ENCODE measurements at regions of chr9 and their contacts with region 1.

Region 1: DNA sequence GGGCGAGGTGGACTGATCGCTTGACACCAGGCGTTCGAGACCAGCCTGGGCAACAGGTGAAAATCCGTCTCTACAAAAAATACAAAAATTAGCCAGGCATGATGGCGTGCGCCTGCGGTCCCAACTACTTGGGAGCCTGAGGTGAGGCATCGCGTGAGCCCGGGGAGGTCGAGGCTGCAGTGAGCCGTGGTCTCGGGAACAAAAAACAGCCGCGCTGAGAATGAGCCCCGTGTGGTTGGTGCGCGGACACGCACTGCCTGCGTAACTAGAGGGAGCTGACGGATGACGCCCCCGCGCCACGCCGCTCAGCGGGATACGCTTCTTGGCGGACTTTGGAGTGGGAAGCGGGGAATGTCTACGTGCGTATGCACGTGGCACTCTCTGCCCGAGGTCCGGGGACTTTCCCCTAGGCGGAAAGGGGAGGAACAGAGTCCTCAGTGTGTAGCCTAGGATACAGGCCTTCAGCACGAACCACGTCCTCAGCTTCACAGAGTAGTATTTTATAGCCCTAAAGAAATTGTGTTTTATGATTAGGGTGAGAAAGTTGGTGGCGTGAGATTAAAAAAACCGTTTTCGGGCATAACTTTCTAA is at the start of gene RMRP:
- DNase-seq: peak; percentile 99
- H3K4me3 ChIP-seq: peak within 1 kb of the TSS; percentile 93
- H3K27ac ChIP-seq: peak within 1 kb of the TSS; percentile 96
- H3K27me3 ChIP-seq: no peaks in the 10 kb centered on the region
- CTCF ChIP-seq: peak; percentile 34
- polyA plus RNA-seq, gene RMRP: 173 and 306 TPM in 2 replicates

Region 2: DNA sequence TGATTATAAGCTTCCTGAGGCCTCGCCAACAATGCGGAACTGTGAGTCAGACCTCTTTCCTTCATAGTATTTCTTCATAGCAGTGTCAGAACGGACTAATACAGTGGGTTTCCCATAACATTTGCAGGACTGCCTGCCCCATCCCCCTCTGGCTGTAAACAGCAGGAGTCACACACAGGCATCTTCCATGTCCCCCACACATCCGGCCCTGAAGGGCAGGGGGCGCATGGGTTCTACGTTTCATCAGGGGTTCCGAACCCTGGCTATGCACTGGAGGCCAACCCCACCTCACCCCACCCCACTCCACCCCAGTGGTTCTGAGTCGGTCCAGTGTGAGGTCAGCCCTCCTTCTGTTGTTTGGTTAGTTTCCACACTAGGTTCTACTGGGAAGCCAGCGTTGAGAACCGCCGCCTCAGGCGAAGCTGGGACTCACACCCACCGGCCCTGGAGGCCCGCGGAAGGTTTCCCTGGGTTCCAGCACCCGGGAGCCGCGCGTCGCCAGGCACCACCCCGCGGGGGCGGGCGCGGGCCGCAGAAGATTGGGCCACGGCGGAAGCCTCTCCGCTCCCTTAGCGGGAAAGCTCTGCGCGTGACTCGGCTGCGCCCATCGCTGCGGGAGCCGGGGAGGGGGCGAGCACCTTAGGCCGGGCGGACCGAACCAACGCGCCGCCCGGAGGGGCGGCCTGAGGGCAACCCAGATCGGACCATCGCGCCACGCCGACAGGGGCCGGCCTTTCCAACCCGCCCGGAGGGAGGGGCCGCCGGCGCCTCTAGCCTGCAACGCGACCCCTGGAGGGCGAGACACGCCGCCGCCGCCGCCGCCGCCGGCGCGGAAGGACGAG is 168.1 kb before region 1 on chr9 and contains the start of gene RUSC2:
- CTCF ChIA-PET with region 1: no interaction called
- POLR2A ChIA-PET with region 1: no interaction called
- DNase-seq: peak; percentile 84
- H3K4me3 ChIP-seq: peak within 1 kb of the TSS; percentile 89
- H3K27ac ChIP-seq: peak within 1 kb of the TSS; percentile 95
- H3K27me3 ChIP-seq: no peaks in the 10 kb centered on the region
- CTCF ChIP-seq: peak; percentile 53
- polyA plus RNA-seq, gene RUSC2: 17.4 and 19.3 TPM in 2 replicates

Region 3: GRCh38 chr9:35646533-35647265 is 10.9 kb before region 1 on chr9:
- CTCF ChIA-PET with region 1: interaction called, 17 read pairs
- POLR2A ChIA-PET with region 1: interaction called, 5 read pairs
- DNase-seq: peak; percentile 66
- H3K4me3 ChIP-seq: peak overlapping the region; percentile 73
- H3K27ac ChIP-seq: peak overlapping the region; percentile 11
- H3K27me3 ChIP-seq: no peaks in the 10 kb centered on the region
- CTCF ChIP-seq: peak; percentile 89

Region 4: GRCh38 chr9:35675732-35676392 is 18.2 kb after region 1 on chr9:
- CTCF ChIA-PET with region 1: interaction called, 9 read pairs
- POLR2A ChIA-PET with region 1: interaction called, 17 read pairs
- DNase-seq: no peak
- H3K4me3 ChIP-seq: peak overlapping the region; percentile 51
- H3K27ac ChIP-seq: no peak overlapping the region
- H3K27me3 ChIP-seq: no peaks in the 10 kb centered on the region
- CTCF ChIP-seq: no peak

Region 5: DNA sequence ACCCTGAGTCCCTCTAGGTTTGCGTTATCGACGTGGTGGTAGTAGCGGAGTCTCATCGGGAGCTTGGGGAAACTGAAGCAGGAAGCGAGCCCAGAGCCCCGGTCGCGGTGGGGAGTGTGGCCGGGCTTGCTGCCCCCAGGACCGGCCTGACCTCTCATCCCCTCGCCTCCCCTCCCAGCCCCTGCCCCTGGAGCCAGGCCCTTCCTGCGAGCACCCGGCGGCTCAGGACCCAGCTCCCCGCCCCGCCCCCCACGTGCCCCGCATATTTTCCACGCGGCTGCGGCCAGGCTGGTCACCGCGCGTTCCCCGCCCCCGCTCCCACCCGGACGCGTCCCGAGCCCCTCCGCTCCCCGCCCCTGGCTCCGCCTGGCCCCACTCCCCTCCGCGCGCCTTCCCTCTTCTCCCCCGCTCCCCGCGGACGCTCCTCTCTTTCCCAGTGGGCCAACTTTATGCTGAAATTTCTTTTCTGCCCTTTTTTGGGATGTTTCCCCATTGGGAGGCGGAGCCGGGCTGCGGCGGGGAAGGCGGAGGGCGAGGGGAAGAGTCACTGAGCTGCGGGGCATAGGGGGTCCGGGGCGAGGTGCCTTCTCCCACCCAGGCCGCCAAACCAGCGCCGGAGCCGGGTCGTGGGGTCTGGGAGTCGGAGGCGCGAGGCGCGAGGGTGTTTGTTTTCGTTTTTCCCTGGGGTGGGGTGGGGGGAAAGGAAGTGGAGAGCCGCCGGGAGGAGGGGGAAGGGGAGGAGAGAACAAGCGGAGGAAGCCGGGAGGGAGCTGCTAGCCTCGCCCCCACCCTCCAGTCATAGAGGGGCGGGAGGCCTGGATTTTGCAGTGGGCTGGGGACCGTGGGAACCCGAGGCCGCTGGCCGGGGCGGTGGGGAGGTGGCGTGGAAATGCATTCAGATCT is 33.0 kb after region 1 on chr9:
- CTCF ChIA-PET with region 1: interaction called, 27 read pairs
- POLR2A ChIA-PET with region 1: interaction called, 75 read pairs
- DNase-seq: no peak
- H3K4me3 ChIP-seq: peak overlapping the region; percentile 98
- H3K27ac ChIP-seq: peak overlapping the region; percentile 97
- H3K27me3 ChIP-seq: no peaks in the 10 kb centered on the region
- CTCF ChIP-seq: no peak

Region 6: GRCh38 chr9:35696525-35697215 is 39.0 kb after region 1 on chr9:
- CTCF ChIA-PET with region 1: interaction called, 27 read pairs
- POLR2A ChIA-PET with region 1: interaction called, 75 read pairs
- DNase-seq: no peak
- H3K4me3 ChIP-seq: no peak overlapping the region
- H3K27ac ChIP-seq: no peak overlapping the region
- H3K27me3 ChIP-seq: no peaks in the 10 kb centered on the region
- CTCF ChIP-seq: peak; percentile 86

Measured in AG04450 (cell line).